CD4-positive, alpha-beta memory T cell (primary cell): ENCODE measurements at regions of chr13 and their contacts with region 1.

Region 1: GRCh38 chr13:32650705-32651311 is 64.6 kb downstream of the PDS5B start:
- DNase-seq: peak; percentile 42 to 56 (median 52)
- H3K4me3 ChIP-seq: no peak overlapping the region
- H3K4me3 Mint-ChIP-seq: no peak overlapping the region
- H3K27ac ChIP-seq: no peak overlapping the region
- H3K27ac Mint-ChIP-seq: peak overlapping the region in 2 of 7 donors; percentile 28 to 44
- H3K4me1 ChIP-seq: peaks cover 23% of the 10 kb centered on the region
- H3K4me1 Mint-ChIP-seq: peaks cover 24 to 52% (median 40%) of the 10 kb centered on the region in 4 donors
- H3K27me3 ChIP-seq: no peaks in the 10 kb centered on the region
- H3K27me3 Mint-ChIP-seq: no peaks in the 10 kb centered on the region

Region 2: DNA sequence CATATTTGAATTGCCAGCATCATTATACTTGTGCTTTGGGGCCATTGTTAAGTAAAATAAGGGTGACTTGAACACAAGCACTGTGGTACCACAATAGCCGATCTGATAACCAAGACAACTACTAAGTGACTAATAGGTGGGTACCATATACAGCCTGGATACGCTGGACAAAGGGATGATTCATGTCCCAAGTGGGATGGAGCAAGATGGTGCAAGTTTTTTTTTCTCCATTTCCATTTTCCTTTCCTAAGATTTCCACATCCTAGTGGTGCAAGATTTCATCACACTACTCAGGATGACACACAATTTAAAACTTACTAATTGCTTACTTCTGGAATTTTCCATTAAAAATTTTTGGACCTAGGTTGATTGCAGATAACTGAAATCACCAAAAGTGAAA is 320.4 kb before region 1 on chr13:
- CTCF ChIA-PET with region 1: no interaction called
- POLR2A ChIA-PET with region 1: no interaction called
- intact Hi-C with region 1: no loop called
- DNase-seq: no peak
- H3K4me3 ChIP-seq: no peak overlapping the region
- H3K4me3 Mint-ChIP-seq: no peak overlapping the region
- H3K27ac ChIP-seq: no peak overlapping the region
- H3K27ac Mint-ChIP-seq: no peak overlapping the region
- H3K4me1 ChIP-seq: no peaks in the 10 kb centered on the region
- H3K4me1 Mint-ChIP-seq: no peaks in the 10 kb centered on the region
- H3K27me3 ChIP-seq: no peaks in the 10 kb centered on the region
- H3K27me3 Mint-ChIP-seq: no peaks in the 10 kb centered on the region

Region 3: DNA sequence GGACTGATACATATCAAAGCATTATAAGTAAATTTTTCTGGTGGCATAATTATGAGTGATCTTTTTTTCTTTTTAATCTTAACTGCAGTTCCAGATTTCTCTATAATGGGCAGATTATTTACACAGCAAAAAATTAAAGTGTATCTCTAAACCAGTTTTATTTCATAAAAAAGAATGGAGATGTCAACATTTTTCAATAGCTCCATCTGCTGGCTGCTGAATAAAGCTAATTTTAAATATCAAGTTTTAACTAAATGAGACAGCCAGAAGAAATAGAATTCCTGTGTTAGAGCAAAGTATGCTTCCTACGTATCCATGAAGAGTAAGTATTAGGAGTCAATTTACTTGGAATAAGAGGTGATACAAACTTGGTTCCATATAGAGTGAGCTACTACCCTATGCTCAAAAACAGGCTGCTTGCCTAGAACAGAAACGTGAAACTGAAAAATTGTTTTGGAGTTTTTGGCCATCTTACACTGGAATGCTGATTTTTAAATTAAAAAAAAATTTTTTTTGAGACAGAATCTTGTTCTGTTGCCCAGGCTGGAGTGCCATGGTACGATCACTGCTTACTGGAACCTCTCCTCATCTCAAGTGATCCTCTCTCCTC is 69.5 kb before region 1 on chr13:
- CTCF ChIA-PET with region 1: interaction called, 36 read pairs
- POLR2A ChIA-PET with region 1: interaction called, 18 read pairs
- intact Hi-C with region 1: loop called (anchors 1 kb)
- DNase-seq: peak in 3 of 5 donors; percentile 19 to 33 (median 28)
- H3K4me3 ChIP-seq: no peak overlapping the region
- H3K4me3 Mint-ChIP-seq: no peak overlapping the region
- H3K27ac ChIP-seq: no peak overlapping the region
- H3K27ac Mint-ChIP-seq: no peak overlapping the region
- H3K4me1 ChIP-seq: peaks cover 8% of the 10 kb centered on the region
- H3K4me1 Mint-ChIP-seq: peaks cover 1 to 10% (median 7%) of the 10 kb centered on the region in 4 donors
- H3K27me3 ChIP-seq: no peaks in the 10 kb centered on the region
- H3K27me3 Mint-ChIP-seq: no peaks in the 10 kb centered on the region

Region 4: GRCh38 chr13:32632343-32632909 is 18.4 kb before region 1 on chr13:
- CTCF ChIA-PET with region 1: interaction called, 41 read pairs
- POLR2A ChIA-PET with region 1: no interaction called
- intact Hi-C with region 1: no loop called
- DNase-seq: no peak
- H3K4me3 ChIP-seq: no peak overlapping the region
- H3K4me3 Mint-ChIP-seq: peak overlapping the region in 1 of 8 donors; percentile 25
- H3K27ac ChIP-seq: no peak overlapping the region
- H3K27ac Mint-ChIP-seq: peak overlapping the region in 1 of 7 donors; percentile 43
- H3K4me1 ChIP-seq: peaks cover 8% of the 10 kb centered on the region
- H3K4me1 Mint-ChIP-seq: peaks cover 15 to 43% (median 34%) of the 10 kb centered on the region in 4 donors
- H3K27me3 ChIP-seq: no peaks in the 10 kb centered on the region
- H3K27me3 Mint-ChIP-seq: no peaks in the 10 kb centered on the region

Region 5: GRCh38 chr13:32639502-32640105 is 11.2 kb before region 1 on chr13:
- CTCF ChIA-PET with region 1: interaction called, 70 read pairs
- POLR2A ChIA-PET with region 1: no interaction called
- intact Hi-C with region 1: loop called (anchors 1 kb)
- DNase-seq: peak; percentile 46 to 59 (median 56)
- H3K4me3 ChIP-seq: no peak overlapping the region
- H3K4me3 Mint-ChIP-seq: no peak overlapping the region
- H3K27ac ChIP-seq: no peak overlapping the region
- H3K27ac Mint-ChIP-seq: no peak overlapping the region
- H3K4me1 ChIP-seq: peaks cover 7% of the 10 kb centered on the region
- H3K4me1 Mint-ChIP-seq: peaks cover 19 to 33% (median 28%) of the 10 kb centered on the region in 4 donors
- H3K27me3 ChIP-seq: no peaks in the 10 kb centered on the region
- H3K27me3 Mint-ChIP-seq: no peaks in the 10 kb centered on the region

Region 6: GRCh38 chr13:32669030-32669646 is 18.3 kb after region 1 on chr13:
- CTCF ChIA-PET with region 1: interaction called, 37 read pairs
- POLR2A ChIA-PET with region 1: no interaction called
- intact Hi-C with region 1: loop called (anchors 1 kb)
- DNase-seq: peak; percentile 35 to 45 (median 40)
- H3K4me3 ChIP-seq: no peak overlapping the region
- H3K4me3 Mint-ChIP-seq: no peak overlapping the region
- H3K27ac ChIP-seq: no peak overlapping the region
- H3K27ac Mint-ChIP-seq: peak overlapping the region in 1 of 7 donors; percentile 21
- H3K4me1 ChIP-seq: no peaks in the 10 kb centered on the region
- H3K4me1 Mint-ChIP-seq: peaks cover 4 to 9% (median 5%) of the 10 kb centered on the region in 4 donors
- H3K27me3 ChIP-seq: no peaks in the 10 kb centered on the region
- H3K27me3 Mint-ChIP-seq: no peaks in the 10 kb centered on the region

Region 7: DNA sequence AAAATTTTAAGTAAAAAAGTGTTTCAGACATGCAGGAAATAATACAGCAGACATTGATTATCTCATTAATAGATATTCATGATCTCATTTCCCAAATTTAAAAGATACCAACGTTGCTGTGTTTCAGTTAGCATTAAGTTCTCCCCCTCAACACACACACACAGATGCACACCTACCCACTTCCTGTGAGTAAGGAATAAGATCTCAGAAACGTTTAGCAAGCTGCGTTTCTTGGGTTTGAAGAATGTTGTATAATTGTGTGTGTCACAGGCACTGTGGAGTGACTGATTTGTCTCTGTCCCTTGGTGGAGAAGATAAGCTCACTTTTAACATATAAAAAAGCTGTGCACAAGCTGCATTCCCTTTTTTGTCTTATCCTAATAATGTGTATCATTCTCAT is 132.3 kb after region 1 on chr13:
- CTCF ChIA-PET with region 1: no interaction called
- POLR2A ChIA-PET with region 1: no interaction called
- intact Hi-C with region 1: no loop called
- DNase-seq: peak in 2 of 5 donors; percentile 15 to 16
- H3K4me3 ChIP-seq: no peak overlapping the region
- H3K4me3 Mint-ChIP-seq: peak overlapping the region in 7 of 8 donors; percentile 13 to 77 (median 49)
- H3K27ac ChIP-seq: no peak overlapping the region
- H3K27ac Mint-ChIP-seq: peak overlapping the region in 3 of 7 donors; percentile 18 to 68 (median 19)
- H3K4me1 ChIP-seq: peaks cover 18% of the 10 kb centered on the region
- H3K4me1 Mint-ChIP-seq: peaks cover 17 to 22% (median 20%) of the 10 kb centered on the region in 4 donors
- H3K27me3 ChIP-seq: no peaks in the 10 kb centered on the region
- H3K27me3 Mint-ChIP-seq: no peaks in the 10 kb centered on the region

Region 8: DNA sequence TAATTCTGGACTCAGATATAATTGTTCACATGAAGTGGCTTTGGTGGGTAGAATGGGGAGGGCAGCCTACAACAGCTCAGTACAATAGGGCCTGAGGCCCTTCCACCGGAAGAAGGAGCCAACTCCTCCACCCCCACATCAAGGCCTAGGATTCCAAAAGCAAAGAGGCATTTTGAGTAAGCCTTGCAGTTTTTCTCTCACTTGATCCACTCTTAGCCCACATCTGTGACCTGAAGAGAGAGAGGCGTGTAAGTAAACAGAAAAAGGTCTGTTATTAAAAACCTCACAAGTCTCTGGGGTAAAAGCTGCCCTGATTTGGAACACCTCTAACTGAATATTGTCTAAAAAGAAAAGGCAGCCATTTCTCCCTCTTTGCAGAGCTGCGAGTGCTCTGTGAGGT is 151.4 kb after region 1 on chr13:
- CTCF ChIA-PET with region 1: no interaction called
- POLR2A ChIA-PET with region 1: no interaction called
- intact Hi-C with region 1: no loop called
- DNase-seq: no peak
- H3K4me3 ChIP-seq: no peak overlapping the region
- H3K4me3 Mint-ChIP-seq: no peak overlapping the region
- H3K27ac ChIP-seq: no peak overlapping the region
- H3K27ac Mint-ChIP-seq: no peak overlapping the region
- H3K4me1 ChIP-seq: no peaks in the 10 kb centered on the region
- H3K4me1 Mint-ChIP-seq: no peaks in the 10 kb centered on the region
- H3K27me3 ChIP-seq: no peaks in the 10 kb centered on the region
- H3K27me3 Mint-ChIP-seq: peaks cover 4% of the 10 kb centered on the region in 2 donors

Region 9: DNA sequence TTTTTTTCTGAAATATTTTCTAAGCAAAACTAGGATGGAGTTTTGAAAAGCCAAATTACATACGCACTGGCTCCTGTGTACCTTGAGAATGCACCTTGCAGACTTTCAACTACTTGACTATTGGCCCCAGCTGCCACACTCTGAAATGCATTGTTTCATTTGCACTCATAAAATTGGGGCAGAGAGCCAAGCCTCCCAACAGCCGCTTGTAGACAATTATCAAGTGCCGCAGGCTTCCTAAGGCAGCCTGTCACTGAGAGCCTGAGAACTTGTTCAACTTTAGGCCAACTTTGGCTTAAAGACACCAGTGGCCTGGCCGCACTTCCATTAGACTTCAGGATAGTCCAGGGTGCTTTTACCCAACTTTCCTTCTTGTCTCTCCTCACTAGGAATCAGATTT is 750.4 kb after region 1 on chr13:
- CTCF ChIA-PET with region 1: no interaction called
- POLR2A ChIA-PET with region 1: no interaction called
- intact Hi-C with region 1: no loop called
- DNase-seq: no peak
- H3K4me3 ChIP-seq: no peak overlapping the region
- H3K4me3 Mint-ChIP-seq: no peak overlapping the region
- H3K27ac ChIP-seq: no peak overlapping the region
- H3K27ac Mint-ChIP-seq: no peak overlapping the region
- H3K4me1 ChIP-seq: no peaks in the 10 kb centered on the region
- H3K4me1 Mint-ChIP-seq: no peaks in the 10 kb centered on the region
- H3K27me3 ChIP-seq: no peaks in the 10 kb centered on the region
- H3K27me3 Mint-ChIP-seq: peaks cover 0 to 5% of the 10 kb centered on the region in 2 donors